ENCODE measurements at regions of chr4 and their contacts with region 1.

Region 1: GRCh38 chr4:128800701-128801284 is 8.7 kb upstream of the JADE1 start:
- DNase-seq: no peak
- ATAC-seq: no peak
- H3K4me3 ChIP-seq: no peak overlapping the region
- H3K27ac ChIP-seq: no peak overlapping the region
- H3K4me1 ChIP-seq: no peaks in the 10 kb centered on the region
- H3K27me3 ChIP-seq: no peaks in the 10 kb centered on the region
- CTCF ChIP-seq: no peak

Region 2: GRCh38 chr4:127698789-127699200 is 1102.0 kb before region 1 on chr4:
- CTCF ChIA-PET with region 1: no interaction called
- POLR2A ChIA-PET with region 1: interaction called, 15 read pairs
- in situ Hi-C with region 1: no loop called
- intact Hi-C with region 1: no loop called
- DNase-seq: no peak
- ATAC-seq: no peak
- H3K4me3 ChIP-seq: no peak overlapping the region
- H3K27ac ChIP-seq: no peak overlapping the region
- H3K4me1 ChIP-seq: no peaks in the 10 kb centered on the region
- H3K27me3 ChIP-seq: no peaks in the 10 kb centered on the region
- CTCF ChIP-seq: no peak

Region 3: DNA sequence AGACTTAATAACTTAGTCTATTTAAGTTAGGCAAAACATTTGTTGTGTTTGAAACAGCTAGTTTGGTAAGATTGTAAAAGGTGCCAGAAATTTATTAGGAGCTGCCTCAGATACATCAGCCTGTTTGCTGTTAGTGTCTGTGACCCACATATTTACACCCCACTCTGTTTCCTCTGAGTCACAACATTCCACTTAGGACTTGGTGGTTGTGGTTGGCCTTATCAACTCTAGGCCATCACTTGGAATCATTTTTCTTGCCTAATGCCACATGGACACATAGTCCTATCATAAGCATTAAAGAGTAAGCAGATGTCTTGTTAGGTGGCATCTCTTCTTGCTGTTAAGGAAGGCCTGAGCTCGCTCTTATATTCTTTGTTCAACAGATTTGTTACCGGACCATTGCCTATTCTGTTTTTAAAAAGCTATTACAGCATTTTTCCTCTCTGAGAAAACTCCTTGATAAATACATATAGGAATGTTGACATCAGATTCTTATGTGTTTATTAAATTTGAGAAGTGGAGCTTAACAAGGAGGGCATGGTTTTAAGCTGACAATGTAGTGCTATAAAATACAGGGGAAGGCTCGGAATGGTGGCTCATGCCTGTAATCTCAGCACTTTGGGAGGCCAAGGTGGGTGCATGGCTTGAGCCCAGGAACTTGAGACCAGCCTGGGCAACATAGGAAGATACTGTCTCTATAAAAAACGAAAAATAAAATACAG is 462.0 kb before region 1 on chr4:
- CTCF ChIA-PET with region 1: no interaction called
- POLR2A ChIA-PET with region 1: no interaction called
- in situ Hi-C with region 1: no loop called
- intact Hi-C with region 1: no loop called
- DNase-seq: peak; percentile 12
- ATAC-seq: peak; percentile 77
- H3K4me3 ChIP-seq: no peak overlapping the region
- H3K27ac ChIP-seq: no peak overlapping the region
- H3K4me1 ChIP-seq: no peaks in the 10 kb centered on the region
- H3K27me3 ChIP-seq: no peaks in the 10 kb centered on the region
- CTCF ChIP-seq: no peak

Region 4: DNA sequence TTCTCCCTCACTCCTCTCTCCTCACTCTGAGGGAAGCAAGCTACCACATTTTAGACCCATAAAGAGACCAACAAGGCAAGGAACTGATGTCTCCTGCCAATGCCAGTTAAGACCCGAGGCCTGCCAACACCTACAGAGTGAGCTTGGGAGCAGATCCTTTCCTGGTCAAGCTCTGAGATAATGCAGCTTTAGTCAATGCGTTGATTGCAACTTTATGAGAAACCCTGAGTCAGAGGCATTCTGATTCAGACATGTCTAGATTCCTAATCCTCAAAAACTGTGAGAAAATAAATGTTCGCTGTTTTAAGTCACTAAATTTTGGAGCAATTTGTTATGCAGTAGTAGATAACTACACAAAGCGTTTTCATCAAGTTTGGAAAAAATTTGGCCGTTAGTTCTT is 124.2 kb after region 1 on chr4:
- CTCF ChIA-PET with region 1: no interaction called
- POLR2A ChIA-PET with region 1: no interaction called
- in situ Hi-C with region 1: no loop called
- intact Hi-C with region 1: no loop called
- DNase-seq: no peak
- ATAC-seq: no peak
- H3K4me3 ChIP-seq: no peak overlapping the region
- H3K27ac ChIP-seq: no peak overlapping the region
- H3K4me1 ChIP-seq: no peaks in the 10 kb centered on the region
- H3K27me3 ChIP-seq: no peaks in the 10 kb centered on the region
- CTCF ChIP-seq: no peak

Measured in Panc1 (cell line).